ENCODE measurements at regions of chr7 and their contacts with region 1.

Region 1: GRCh38 chr7:112898432-112899290 is 108.5 kb upstream of the TMEM168 start:
- DNase-seq: peak; percentile 78
- H3K4me3 Mint-ChIP-seq: no peak overlapping the region
- H3K27ac Mint-ChIP-seq: peak overlapping the region; percentile 19
- H3K4me1 Mint-ChIP-seq: no peaks in the 10 kb centered on the region
- H3K27me3 Mint-ChIP-seq: no peaks in the 10 kb centered on the region
- CTCF ChIP-seq: peak; percentile 80

Region 2: DNA sequence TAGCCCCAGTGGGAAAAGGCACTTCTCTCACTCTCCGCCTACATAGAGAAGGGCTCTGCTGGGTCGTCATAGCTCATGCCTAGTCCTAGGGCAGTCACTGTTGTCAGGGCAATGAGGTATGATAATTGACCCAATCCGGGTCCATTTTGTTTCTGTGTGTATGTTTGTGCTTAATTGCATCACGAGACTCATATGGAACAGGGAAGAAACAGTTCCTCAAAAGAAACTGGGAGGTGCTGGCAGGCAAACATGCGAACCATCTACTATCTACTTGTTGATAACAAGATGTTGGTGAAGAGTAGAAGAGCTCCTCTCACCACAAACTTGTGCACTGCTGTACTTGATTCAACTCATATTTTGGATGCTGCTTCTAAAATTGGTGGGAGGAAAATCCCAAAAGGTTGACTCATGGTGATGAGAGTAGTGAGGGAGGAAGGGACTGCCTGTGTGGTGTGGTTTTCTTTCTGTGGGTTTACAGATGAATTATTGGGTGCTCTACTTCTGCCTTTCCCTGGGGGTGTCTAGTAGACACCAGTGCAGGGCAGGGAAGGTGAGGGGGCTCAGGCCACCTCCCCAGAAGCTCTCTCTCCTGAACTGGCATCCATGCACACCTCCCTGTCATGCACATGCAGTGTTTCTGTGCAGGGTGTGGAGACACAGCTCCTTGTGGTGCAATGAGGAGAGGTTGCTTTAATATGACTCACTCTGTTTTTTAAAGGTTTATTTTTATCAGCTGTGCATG is 388.5 kb before region 1 on chr7:
- CTCF ChIA-PET with region 1: interaction called, 7 read pairs
- POLR2A ChIA-PET with region 1: no interaction called
- intact Hi-C with region 1: loop called (anchors 1 kb)
- DNase-seq: peak; percentile 46
- H3K4me3 Mint-ChIP-seq: no peak overlapping the region
- H3K27ac Mint-ChIP-seq: no peak overlapping the region
- H3K4me1 Mint-ChIP-seq: peaks cover 14% of the 10 kb centered on the region
- H3K27me3 Mint-ChIP-seq: no peaks in the 10 kb centered on the region
- CTCF ChIP-seq: no peak

Region 3: DNA sequence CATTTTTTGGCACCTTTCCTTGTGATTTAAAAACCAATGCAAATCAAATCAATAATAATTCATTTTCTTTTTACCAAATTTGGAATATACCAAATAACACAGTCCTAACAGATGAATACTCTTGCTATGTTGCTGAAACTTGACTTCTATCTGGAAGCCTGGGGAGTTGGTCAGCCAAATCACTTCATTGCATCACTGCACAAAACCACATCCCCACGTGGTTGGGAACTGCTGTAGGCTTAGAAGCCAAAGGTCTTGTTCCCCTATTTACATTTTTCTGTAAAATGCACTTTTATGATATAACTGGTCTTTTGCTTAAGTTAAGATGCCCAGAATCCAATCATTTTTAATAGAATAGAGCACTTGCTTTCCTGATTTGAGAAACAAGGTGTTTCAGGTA is 172.8 kb after region 1 on chr7:
- CTCF ChIA-PET with region 1: no interaction called
- POLR2A ChIA-PET with region 1: no interaction called
- intact Hi-C with region 1: no loop called
- DNase-seq: peak; percentile 41
- H3K4me3 Mint-ChIP-seq: no peak overlapping the region
- H3K27ac Mint-ChIP-seq: no peak overlapping the region
- H3K4me1 Mint-ChIP-seq: no peaks in the 10 kb centered on the region
- H3K27me3 Mint-ChIP-seq: no peaks in the 10 kb centered on the region
- CTCF ChIP-seq: no peak

Measured in MCF 10A (cell line).